T-cell (primary cell): ENCODE measurements at regions of chr6 and their contacts with region 1.

Region 1: GRCh38 chr6:122839477-122839876 is 50.4 kb downstream of the SMPDL3A start:
- DNase-seq: peak in 28 of 35 experiments; percentile 1 to 62 (median 21)
- ATAC-seq: peak in 2 of 4 experiments; percentile 27 to 49
- H3K4me3 ChIP-seq: no peak overlapping the region
- H3K4me3 Mint-ChIP-seq: no peak overlapping the region
- H3K27ac ChIP-seq: no peak overlapping the region
- H3K27ac Mint-ChIP-seq: no peak overlapping the region
- H3K4me1 ChIP-seq: no peaks in the 10 kb centered on the region
- H3K4me1 Mint-ChIP-seq: no peaks in the 10 kb centered on the region
- H3K27me3 ChIP-seq: peaks cover 0 to 3% of the 10 kb centered on the region in 2 experiments
- H3K27me3 Mint-ChIP-seq: peaks cover 4 to 12% of the 10 kb centered on the region in 2 donors

Region 2: DNA sequence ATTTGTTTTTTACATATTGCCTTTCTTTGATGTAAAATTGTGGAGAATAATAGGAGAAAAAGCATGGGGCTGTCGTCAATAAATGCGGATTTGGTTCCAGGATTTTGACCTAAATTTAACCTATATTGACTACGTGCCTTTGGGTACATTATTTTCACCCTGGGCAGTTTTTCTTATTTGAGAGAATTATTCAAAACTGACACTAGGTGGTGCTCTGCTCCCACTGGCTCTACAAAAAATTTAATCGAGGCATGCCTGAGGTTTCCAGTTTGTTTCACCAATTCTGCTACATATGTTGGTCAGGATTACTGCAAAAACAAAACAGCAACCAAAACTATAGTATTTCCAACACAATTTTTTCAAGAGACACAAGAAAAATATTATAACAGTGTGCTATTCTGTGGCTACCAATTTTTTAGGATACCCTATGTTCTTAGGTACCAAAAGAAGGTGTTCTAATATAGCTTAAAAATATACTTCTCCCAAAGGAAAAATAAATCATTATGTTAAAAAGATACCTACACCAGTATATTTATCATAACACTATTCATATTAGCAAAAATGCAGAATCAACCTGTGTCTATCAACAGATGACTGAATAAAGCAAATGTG is 108.6 kb before region 1 on chr6:
- CTCF ChIA-PET with region 1: interaction called, 5 to 36 read pairs
- POLR2A ChIA-PET with region 1: no interaction called
- DNase-seq: peak in 1 of 35 experiments; percentile 41
- ATAC-seq: no peak
- H3K4me3 ChIP-seq: no peak overlapping the region
- H3K4me3 Mint-ChIP-seq: no peak overlapping the region
- H3K27ac ChIP-seq: no peak overlapping the region
- H3K27ac Mint-ChIP-seq: no peak overlapping the region
- H3K4me1 ChIP-seq: no peaks in the 10 kb centered on the region
- H3K4me1 Mint-ChIP-seq: no peaks in the 10 kb centered on the region
- H3K27me3 ChIP-seq: no peaks in the 10 kb centered on the region
- H3K27me3 Mint-ChIP-seq: peaks cover 4 to 7% of the 10 kb centered on the region in 2 donors